Panc1 (cell line): ENCODE measurements at regions of chr2 and their contacts with region 1.

Region 1: DNA sequence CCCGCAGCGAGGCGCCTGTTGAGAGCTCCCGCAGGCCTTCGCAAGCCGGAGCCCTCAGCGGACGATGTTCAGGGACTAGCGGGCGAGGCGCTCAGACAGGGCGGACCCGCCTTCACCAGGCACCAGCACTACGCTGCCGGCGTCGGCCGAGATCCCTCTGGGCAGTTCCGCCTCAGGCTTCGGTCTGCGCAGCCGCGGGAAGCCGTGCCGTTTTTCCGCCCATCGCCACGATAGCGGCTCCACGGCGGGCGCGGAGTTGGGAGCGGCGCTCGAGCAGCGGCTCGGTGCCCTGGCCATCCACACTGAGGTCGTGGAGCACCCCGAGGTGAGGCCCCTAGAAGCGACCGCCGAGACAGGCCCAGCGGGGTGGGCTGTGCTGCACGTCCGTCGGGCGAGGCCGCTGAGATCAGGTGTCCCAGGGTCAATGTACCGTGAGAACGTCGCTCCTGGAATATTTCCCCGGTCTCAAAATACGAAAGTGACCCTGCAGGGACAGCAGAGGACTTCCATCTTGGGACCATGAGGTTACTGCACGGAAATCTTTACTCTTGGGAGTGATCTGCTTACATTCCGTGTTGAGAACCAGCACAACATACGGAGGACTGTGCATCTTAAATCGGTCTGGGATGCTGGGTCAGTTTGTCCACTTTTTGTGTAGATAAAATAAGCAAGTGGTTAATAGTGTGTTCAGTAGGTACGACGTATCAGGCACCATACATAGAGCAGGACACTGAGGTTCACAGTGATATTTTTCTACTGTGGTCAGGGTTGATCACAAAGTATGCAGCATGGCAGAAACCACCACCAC is 13.3 kb upstream of the MTIF2 start:
- DNase-seq: peak; percentile 58
- ATAC-seq: peak; percentile 96
- H3K4me3 ChIP-seq: peak overlapping the region; percentile 59 to 93
- H3K27ac ChIP-seq: peak overlapping the region; percentile 97
- H3K4me1 ChIP-seq: peaks cover 8% of the 10 kb centered on the region; the same call in 1 of the 2 replicates
- H3K27me3 ChIP-seq: no peaks in the 10 kb centered on the region
- CTCF ChIP-seq: no peak

Region 2: GRCh38 chr2:54838585-54839035 is 443.7 kb before region 1 on chr2:
- CTCF ChIA-PET with region 1: interaction called, 11 read pairs
- POLR2A ChIA-PET with region 1: no interaction called
- in situ Hi-C with region 1: no loop called
- intact Hi-C with region 1: no loop called
- DNase-seq: peak; percentile 80
- ATAC-seq: peak; percentile 94
- H3K4me3 ChIP-seq: no peak overlapping the region
- H3K27ac ChIP-seq: no peak overlapping the region
- H3K4me1 ChIP-seq: no peaks in the 10 kb centered on the region
- H3K27me3 ChIP-seq: no peaks in the 10 kb centered on the region
- CTCF ChIP-seq: peak; percentile 95

Region 3: GRCh38 chr2:55482186-55482884 is 200.0 kb after region 1 on chr2:
- CTCF ChIA-PET with region 1: no interaction called
- POLR2A ChIA-PET with region 1: interaction called, 10 read pairs
- in situ Hi-C with region 1: no loop called
- intact Hi-C with region 1: no loop called
- DNase-seq: peak; percentile 5
- ATAC-seq: no peak
- H3K4me3 ChIP-seq: no peak overlapping the region
- H3K27ac ChIP-seq: no peak overlapping the region
- H3K4me1 ChIP-seq: no peaks in the 10 kb centered on the region
- H3K27me3 ChIP-seq: no peaks in the 10 kb centered on the region; the same call in 1 of the 2 replicates
- CTCF ChIP-seq: no peak